ENCODE measurements at regions of chr5 and their contacts with region 1.

Region 1: GRCh38 chr5:144794922-144795321 is 624.2 kb downstream of the KCTD16 start:
- DNase-seq: no peak

Region 2: DNA sequence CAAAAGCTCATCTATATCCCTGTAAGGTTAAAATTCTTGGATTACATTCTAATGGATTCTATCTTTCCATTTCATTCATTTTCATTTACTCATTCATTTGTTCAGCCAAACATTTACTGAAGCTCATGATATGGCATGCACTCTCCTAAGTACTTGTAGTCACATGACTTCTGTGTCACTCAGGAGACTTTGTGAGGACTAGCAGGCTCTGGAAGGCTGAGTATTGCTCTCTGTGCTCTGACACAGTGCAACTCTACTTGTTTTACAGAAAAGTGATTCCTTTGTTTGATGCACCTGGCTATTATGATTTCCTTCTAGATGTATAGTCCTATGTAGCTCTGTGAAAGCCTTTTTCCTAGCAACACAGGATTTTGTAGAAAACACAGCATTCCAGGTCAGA is 677.5 kb before region 1 on chr5:
- intact Hi-C with region 1: loop called in 1 of 2 experiments (anchors 10 kb)
- DNase-seq: no peak

Region 3: DNA sequence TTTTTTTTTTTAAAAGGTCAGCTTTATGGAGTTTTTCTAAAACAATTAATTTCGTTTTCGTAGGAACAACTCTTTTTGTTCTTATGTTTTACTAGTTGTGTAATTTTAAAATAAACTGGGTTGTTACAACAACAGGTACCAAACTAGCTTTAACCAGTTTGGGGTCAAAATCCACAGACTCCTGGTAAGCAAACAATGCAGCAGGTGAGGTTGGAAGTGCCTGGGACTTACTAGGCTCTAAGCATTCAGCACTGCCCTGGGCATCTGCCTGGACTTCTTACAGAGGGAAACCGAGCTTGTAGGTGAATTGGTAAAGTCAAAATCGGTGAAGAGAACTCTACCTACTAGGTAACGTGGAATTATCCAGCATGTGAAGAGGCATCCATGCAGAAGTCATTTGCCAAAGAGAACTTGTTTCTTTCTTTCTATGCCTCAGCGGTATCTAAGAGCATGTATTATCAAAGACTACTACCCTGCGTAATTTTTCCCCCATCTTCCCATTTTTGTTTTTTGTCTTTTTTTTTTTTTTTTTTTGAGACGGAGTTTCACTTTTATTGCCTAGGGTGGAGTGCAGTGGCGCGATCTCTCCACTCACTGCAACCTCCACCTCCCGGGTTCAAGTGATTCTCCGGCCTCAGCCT is 478.8 kb before region 1 on chr5:
- intact Hi-C with region 1: no loop called
- DNase-seq: no peak

Region 4: DNA sequence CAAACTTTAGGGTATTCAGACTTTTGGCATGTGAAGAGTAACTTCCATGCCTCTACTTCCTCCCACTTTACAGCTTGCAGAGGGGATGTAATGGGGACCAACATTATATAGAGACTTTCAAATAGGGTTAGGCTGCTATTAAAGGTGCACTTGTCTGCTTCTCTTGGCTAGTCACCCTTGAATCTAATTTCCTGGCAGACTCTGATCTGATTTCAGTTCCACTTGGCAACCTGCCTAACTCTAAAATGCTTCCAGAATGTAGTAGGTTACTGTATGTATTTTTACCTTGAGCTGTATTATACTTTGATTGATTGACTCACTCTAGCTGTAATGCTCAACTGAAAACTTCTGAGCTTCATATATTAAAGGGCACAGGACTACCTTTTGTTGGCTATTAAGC is 69.2 kb after region 1 on chr5:
- intact Hi-C with region 1: loop called in 1 of 2 experiments (anchors 2 kb)
- DNase-seq: no peak

Region 5: GRCh38 chr5:144886668-144887067 is 91.7 kb after region 1 on chr5:
- intact Hi-C with region 1: no loop called
- DNase-seq: no peak